ENCODE measurements at regions of chr5 and their contacts with region 1.

Region 1: DNA sequence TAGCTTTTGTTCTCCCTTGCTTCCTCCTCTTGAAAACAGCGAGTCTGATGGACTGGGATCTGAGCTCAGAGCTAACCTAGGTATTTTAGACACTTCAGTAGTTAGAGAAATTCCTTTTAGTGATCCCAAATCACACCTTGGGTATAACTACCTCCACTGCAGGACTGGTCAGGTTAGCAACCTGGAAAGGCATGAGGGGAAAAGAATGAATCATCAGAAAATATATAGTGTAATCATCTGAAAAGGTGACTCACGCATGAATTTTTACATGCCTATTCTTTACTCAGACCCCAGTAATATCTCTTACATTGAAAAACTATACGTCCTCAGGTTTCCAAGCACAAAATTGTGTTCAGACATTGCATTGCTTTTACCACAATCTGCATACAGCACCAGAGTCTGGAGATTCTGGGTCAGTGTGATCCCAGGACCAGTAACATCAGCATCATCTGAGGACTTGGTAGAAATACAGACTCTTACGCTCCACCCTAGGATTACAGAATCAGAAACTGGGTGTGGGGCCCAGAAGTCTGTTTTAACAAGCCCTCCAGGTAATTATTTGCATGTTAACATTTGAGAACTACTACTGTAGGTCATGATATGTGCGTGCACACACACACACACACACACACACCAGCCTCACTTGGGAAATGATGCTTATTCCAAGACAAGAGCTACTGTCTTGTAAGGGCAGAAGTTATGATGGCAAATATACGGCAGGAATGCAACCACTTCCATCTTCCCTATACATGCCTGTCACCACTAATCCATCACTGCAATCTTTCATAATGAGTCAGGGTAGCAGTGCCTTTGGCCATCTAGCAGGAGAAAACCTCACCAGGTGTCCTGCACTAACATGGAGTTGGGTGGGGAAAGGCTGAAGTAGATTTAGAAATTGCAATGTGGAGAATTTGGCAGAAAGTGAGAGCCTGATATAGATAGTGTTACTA is 271.6 kb upstream of the MAP3K1 start:
- DNase-seq: peak; percentile 62 to 97
- H3K4me3 ChIP-seq: no peak overlapping the region
- H3K27ac ChIP-seq: peak overlapping the region; percentile 96
- H3K4me1 ChIP-seq: peaks cover 39% of the 10 kb centered on the region
- H3K27me3 ChIP-seq: no peaks in the 10 kb centered on the region
- CTCF ChIP-seq: no peak

Region 2: GRCh38 chr5:56012281-56012963 is 531.3 kb before region 1 on chr5:
- CTCF ChIA-PET with region 1: no interaction called
- POLR2A ChIA-PET with region 1: no interaction called
- intact Hi-C with region 1: no loop called
- DNase-seq: peak in 1 of 2 experiments; percentile 56
- H3K4me3 ChIP-seq: no peak overlapping the region
- H3K27ac ChIP-seq: peak overlapping the region; percentile 56
- H3K4me1 ChIP-seq: peaks cover 13% of the 10 kb centered on the region
- H3K27me3 ChIP-seq: no peaks in the 10 kb centered on the region
- CTCF ChIP-seq: no peak

Region 3: DNA sequence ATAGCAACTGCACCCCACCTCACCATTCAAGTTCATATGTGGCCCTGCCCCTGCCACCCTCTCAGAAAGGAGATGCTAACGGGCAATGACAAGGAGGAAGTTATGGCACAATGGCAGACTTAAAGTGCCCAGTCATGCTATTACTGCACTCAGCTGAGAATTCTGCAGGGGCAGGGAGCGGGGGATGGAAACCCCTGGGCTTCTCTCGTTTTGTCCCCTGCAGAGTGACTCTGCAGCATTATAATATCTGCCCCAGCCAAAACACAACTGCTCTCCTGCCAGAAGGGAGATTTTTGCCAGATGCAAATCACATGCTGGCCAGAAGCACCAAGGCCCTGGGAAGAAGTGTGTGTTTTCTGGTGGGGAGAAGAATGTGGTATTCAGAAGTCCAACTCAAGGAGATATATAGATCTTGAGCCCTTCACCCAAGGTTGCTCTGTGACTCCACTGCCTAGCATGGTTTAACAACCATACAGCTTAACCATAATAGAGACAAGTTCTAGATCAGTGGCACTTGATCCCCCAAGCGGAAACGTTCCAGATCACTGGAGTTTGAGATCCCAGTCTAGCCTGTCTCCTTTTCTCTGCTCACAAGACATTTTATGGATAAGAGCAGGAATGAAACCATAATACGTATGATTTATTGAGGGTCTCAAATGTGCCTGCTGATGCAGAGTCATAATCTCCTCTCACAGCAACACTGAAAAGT is 64.7 kb after region 1 on chr5:
- CTCF ChIA-PET with region 1: no interaction called
- POLR2A ChIA-PET with region 1: no interaction called
- intact Hi-C with region 1: no loop called
- DNase-seq: peak in 1 of 2 experiments; percentile 33
- H3K4me3 ChIP-seq: no peak overlapping the region
- H3K27ac ChIP-seq: no peak overlapping the region
- H3K4me1 ChIP-seq: peaks cover 15% of the 10 kb centered on the region; the same call in 1 of the 2 replicates
- H3K27me3 ChIP-seq: no peaks in the 10 kb centered on the region
- CTCF ChIP-seq: no peak

Region 4: DNA sequence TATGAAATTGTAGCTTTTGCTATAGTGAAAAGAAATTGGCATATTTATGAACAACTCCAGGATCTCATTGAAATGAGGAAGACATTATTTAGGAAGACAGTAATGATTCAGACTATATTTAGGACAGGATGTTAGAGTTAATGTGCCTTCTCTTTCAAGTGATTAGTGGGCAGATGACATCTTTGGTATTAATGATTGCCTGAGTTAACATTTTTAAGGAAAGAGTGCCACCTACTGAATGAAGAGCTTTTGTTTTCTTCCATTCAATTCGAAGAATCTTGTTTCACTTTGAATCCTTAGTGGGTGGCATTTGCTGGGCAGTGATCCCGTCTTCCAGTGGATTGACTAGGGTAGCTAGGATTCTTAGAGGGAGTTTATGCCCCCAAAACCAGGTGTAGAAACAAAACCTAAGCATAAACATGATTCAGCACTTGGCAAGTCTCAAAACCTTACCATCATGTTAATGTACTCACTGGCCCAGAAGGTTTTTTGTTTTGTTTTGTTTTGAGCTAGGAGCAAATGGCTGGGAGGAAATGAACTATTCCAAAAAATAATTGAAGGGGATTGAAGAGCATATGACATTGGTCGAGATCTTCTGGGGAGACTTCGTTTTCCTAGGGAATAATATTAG is 294.8 kb after region 1 on chr5:
- CTCF ChIA-PET with region 1: interaction called, 7 read pairs
- POLR2A ChIA-PET with region 1: no interaction called
- intact Hi-C with region 1: loop called (anchors 5 kb)
- DNase-seq: peak in 1 of 2 experiments; percentile 58
- H3K4me3 ChIP-seq: no peak overlapping the region; the same call in 1 of the 2 replicates
- H3K27ac ChIP-seq: peak overlapping the region; percentile 32
- H3K4me1 ChIP-seq: peaks cover 21% of the 10 kb centered on the region
- H3K27me3 ChIP-seq: no peaks in the 10 kb centered on the region
- CTCF ChIP-seq: peak; percentile 75